Endothelial cell of umbilical vein (primary cell): ENCODE measurements at regions of chr11 and their contacts with region 1.

Region 1: DNA sequence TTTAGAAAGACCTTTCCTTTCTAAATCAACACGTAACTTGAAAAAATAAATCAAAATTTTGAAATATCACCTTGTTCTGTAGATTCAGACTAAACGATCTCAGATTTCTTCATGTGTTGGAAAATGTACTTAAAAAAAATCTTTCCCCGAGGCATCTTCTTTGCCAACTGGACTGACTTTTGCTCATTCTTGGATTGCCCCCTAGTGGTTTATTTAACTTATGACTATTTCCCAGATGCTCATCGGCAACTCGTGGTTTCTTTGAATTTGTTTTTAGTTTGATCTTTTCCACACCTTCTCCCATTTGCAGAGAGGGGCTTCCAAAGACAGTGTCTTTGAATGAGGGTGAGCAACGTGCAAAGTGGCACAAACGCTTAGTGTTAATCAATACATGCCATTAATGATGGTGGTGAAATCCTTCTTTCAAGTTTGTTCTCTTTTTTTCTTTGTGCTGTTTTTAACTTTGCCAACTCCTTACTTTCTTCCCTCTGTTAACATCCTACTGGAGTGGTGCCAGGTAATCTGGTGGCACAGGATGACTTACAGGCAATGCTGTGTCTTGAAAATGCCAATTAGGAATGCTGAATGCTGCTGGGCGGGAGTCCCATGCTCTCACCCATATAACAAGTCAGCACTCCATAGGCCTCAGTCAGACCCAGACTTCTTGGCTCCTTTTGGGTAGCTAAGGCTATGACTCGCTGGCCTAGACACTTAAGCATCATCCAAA is 18.3 kb downstream of the PRSS23 start:
- DNase-seq: peak; percentile 84
- H3K4me3 ChIP-seq: no peak overlapping the region
- H3K27ac ChIP-seq: peak overlapping the region; percentile 77
- H3K4me1 ChIP-seq: peaks cover 53% of the 10 kb centered on the region
- H3K27me3 ChIP-seq: no peaks in the 10 kb centered on the region
- CTCF ChIP-seq: peak; percentile 41 to 45
- POLR2A ChIP-seq: no peak

Region 2: DNA sequence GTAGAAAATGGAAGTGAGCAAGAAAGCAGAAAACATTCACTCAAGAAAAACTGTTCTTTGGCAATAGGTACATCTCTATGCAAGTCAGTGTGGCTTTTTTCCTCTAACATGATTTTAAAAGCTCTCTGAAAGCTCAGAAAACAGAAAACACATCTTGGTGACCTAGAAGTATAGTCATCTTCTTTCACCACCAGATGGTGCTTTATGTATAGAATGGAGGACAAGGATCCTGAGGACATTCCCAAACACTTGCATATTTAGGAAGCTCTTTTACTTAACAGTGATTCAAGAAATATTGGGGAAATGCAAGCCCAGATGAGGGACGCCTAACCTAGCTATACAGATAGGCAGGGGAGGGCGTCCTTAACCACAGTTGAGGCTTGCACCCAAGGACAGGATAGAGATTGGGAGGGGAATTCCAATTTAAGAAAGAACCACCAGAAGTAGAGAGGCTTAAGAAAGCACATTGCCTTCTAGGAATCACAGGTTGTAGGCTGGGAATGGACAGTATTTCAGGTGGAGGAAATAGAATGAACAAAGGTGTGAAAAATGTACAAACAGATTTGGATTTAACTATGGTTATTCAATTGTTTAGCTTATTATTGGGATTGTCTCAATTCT is 457.7 kb before region 1 on chr11:
- CTCF ChIA-PET with region 1: interaction called, 11 read pairs
- POLR2A ChIA-PET with region 1: no interaction called
- dilution Hi-C with region 1: no loop called
- intact Hi-C with region 1: loop called (anchors 1 kb)
- DNase-seq: peak; percentile 61
- H3K4me3 ChIP-seq: no peak overlapping the region
- H3K27ac ChIP-seq: peak overlapping the region; percentile 34
- H3K4me1 ChIP-seq: peaks cover 7% of the 10 kb centered on the region
- H3K27me3 ChIP-seq: no peaks in the 10 kb centered on the region
- CTCF ChIP-seq: peak; percentile 19 to 33
- POLR2A ChIP-seq: no peak

Region 3: DNA sequence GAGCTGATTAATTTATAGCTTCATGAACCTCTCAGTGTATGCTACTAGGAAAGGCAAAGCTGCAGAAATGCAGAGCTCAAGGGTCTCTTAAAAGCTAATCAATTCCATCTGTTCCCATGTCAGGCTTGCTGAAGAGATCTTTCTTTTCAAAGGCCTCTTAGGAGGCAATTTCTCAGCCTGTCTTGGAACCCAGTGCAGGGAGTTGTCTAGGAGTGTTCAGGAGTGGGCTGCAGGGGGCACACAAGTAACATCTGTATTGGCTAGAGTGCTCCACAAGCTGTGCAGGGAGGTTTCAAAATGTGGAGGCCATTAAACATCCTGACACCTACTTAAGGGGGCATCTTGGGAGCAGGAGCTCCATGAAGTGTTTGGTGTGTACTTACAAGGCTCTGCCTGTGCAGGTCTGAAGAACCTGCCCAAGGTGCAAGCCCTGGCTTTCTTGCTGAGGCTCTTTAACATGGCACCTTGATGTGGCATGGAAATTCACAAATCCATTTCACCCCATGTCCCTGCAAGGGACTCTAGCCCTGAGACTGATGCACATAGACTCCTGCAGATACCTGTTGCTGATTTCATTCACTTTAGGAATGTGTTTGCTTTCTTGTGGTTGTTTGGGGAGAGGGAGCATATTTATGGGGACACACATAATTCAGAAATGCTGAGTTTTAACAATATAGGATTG is 280.9 kb before region 1 on chr11:
- CTCF ChIA-PET with region 1: interaction called, 5 read pairs
- POLR2A ChIA-PET with region 1: no interaction called
- dilution Hi-C with region 1: no loop called
- intact Hi-C with region 1: loop called (anchors 1 kb)
- DNase-seq: peak; percentile 64
- H3K4me3 ChIP-seq: no peak overlapping the region
- H3K27ac ChIP-seq: no peak overlapping the region
- H3K4me1 ChIP-seq: no peaks in the 10 kb centered on the region
- H3K27me3 ChIP-seq: no peaks in the 10 kb centered on the region
- CTCF ChIP-seq: peak; percentile 23 to 42
- POLR2A ChIP-seq: no peak

Region 4: GRCh38 chr11:86632499-86633269 is 185.9 kb before region 1 on chr11:
- CTCF ChIA-PET with region 1: no interaction called
- POLR2A ChIA-PET with region 1: no interaction called
- dilution Hi-C with region 1: no loop called
- intact Hi-C with region 1: loop called (anchors 1 kb)
- DNase-seq: peak; percentile 96
- H3K4me3 ChIP-seq: no peak overlapping the region
- H3K27ac ChIP-seq: peak overlapping the region; percentile 83
- H3K4me1 ChIP-seq: peaks cover 19% of the 10 kb centered on the region
- H3K27me3 ChIP-seq: no peaks in the 10 kb centered on the region
- CTCF ChIP-seq: peak in 1 of 2 donors; percentile 55
- POLR2A ChIP-seq: no peak

Region 5: DNA sequence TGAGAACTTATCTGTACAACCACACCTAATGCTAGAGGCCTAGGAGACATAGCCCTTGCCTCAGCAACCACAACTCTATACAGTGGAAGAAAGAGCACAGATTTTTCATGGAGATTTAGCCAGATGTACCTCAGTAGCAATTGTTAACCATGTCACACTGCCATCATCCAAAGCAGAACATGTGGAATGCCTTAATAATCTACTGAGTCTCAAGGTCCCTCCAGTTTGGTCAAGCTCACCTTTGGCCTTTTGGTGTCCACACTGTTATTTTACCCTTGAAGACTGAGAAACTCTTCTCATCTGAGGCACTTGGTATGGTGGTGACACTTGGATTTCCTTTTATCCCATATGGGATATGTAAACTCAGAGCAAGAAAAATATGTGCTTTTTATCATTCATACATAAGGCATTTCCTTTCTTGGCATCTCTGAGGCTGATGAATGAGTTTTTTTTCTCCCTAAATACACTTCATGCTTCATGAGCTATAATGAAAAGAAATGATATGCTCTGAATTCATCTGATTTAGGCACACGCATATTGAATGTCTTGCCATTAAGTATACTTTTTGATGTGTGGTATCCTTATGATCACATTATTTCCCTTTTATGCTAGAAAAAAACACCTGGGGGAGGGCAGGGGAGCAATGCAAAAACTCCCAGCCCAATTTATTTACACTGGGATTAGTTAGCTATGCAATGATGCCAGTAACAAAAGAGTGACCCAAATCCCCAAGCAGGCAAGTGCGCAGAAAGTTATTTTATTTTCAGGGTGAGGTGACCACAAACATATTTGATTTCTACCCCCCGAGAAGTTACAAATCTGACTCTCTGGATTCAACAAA is 82.9 kb before region 1 on chr11:
- CTCF ChIA-PET with region 1: no interaction called
- POLR2A ChIA-PET with region 1: no interaction called
- dilution Hi-C with region 1: no loop called
- intact Hi-C with region 1: loop called (anchors 1 kb)
- DNase-seq: peak; percentile 78
- H3K4me3 ChIP-seq: no peak overlapping the region
- H3K27ac ChIP-seq: peak overlapping the region; percentile 93
- H3K4me1 ChIP-seq: peaks cover 55% of the 10 kb centered on the region
- H3K27me3 ChIP-seq: no peaks in the 10 kb centered on the region
- CTCF ChIP-seq: no peak
- POLR2A ChIP-seq: peak; percentile 39

Region 6: GRCh38 chr11:86802601-86803051 is 16.0 kb before region 1 on chr11:
- CTCF ChIA-PET with region 1: interaction called, 6 read pairs
- POLR2A ChIA-PET with region 1: no interaction called
- dilution Hi-C with region 1: no loop called
- intact Hi-C with region 1: loop called (anchors 1 kb)
- DNase-seq: peak; percentile 80
- H3K4me3 ChIP-seq: peak overlapping the region; percentile 82 to 96 (median 95)
- H3K27ac ChIP-seq: peak overlapping the region; percentile 96
- H3K4me1 ChIP-seq: peaks cover 63% of the 10 kb centered on the region
- H3K27me3 ChIP-seq: no peaks in the 10 kb centered on the region
- CTCF ChIP-seq: peak; percentile 57 to 60
- POLR2A ChIP-seq: no peak